ENCODE measurements at regions of chr17 and their contacts with region 1.

Region 1: DNA sequence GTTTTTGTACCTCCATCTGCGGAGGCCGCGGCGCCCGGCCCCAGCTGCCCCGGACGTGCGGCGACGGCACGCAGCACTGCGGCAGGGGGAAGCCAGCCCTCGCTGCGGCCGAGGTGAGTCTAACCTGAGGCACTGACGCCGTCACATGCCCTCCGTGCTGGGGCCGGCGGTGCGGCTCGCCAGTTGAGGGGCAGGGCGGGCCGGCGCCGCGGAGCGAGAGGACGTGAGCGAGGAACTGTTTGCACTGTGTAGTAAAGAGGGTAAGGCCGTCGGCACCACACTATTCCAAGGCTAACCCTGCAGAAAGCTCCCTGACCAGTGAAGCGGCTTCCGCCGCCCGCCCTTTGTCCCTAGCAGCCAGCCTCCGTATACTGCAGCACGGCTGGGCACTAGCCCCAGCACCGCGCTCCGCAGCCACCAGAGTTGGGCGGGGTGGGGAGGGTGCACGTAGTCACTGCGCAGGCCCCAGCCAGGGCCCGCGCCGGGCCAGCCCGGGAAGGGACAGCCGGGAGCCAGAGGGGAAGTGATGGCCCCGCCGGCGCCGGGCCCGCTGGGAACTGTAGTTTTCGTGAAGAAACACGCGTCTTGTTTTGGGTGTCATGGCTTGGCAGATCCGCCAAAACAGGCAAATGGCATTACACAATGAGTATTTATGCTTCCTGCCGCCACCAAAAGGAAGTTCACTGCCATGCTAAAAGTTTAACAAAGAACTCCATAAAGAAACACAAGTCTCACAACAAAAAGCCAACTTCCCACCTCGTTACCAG is 580 bp upstream of the KANSL1 start:
- DNase-seq: peak; percentile 98
- ATAC-seq: peak; percentile 98

Region 2: DNA sequence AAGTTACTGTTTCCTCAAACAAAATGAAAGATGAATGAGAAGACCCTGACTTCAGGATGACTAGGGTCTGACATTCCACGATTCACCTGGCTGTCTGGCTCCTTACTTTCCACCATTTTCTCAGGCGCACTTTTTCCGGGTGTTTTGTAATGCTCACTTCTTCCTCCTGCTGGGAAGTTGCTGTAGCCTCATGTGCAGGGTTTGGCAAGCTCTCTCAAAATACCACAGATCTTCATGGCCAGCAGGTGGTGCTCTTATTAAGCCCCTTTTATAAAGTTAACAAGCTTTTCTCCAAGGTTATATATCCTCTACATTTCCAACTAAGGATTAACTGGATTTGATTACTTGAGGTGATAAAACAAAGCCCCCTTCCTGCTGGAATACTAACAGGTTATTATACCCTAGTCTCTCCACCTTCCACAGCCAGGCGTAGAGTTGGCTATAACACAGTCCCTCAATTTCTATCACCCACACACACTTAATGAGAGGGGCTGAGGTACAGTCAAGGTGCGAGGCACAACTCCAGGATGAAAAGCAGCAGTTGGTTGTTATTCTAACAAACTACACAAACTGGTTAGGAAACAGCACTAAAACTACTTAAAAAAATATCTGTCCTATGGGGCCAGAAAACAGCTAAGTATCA is 149.4 kb before region 1 on chr17:
- intact Hi-C with region 1: loop called (anchors 1 kb)
- DNase-seq: no peak
- ATAC-seq: peak; percentile 77

Region 3: DNA sequence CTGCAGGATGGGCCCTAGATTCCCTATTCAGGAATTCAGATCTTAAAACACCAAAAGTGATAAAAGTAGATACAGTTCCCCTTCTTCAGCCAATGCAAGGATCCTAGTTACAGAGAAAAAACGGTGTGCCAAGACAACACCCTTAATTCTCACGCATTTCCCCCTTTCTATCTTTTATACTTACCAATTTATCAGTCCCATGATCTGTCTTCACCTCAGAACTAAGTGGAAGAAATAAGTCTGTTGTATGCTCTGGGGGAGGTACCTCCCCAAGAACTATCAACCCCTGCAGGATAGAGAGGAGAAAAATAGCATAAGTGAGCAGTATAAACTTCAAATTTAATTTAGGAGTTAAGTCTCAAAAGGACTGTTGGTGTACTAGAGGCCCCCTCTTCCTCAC is 111.6 kb before region 1 on chr17:
- intact Hi-C with region 1: no loop called
- DNase-seq: no peak
- ATAC-seq: no peak

Region 4: GRCh38 chr17:46115699-46116098 is 78.1 kb before region 1 on chr17:
- intact Hi-C with region 1: loop called (anchors 5 kb)
- DNase-seq: no peak
- ATAC-seq: peak; percentile 49

Region 5: GRCh38 chr17:46157443-46158062 is 36.3 kb before region 1 on chr17:
- intact Hi-C with region 1: loop called (anchors 5 kb)
- DNase-seq: no peak
- ATAC-seq: no peak

Measured in Right ventricle myocardium inferior (tissue), 1 donor.